MCF 10A (cell line): ENCODE measurements at regions of chr10 and their contacts with region 1.

Region 1: DNA sequence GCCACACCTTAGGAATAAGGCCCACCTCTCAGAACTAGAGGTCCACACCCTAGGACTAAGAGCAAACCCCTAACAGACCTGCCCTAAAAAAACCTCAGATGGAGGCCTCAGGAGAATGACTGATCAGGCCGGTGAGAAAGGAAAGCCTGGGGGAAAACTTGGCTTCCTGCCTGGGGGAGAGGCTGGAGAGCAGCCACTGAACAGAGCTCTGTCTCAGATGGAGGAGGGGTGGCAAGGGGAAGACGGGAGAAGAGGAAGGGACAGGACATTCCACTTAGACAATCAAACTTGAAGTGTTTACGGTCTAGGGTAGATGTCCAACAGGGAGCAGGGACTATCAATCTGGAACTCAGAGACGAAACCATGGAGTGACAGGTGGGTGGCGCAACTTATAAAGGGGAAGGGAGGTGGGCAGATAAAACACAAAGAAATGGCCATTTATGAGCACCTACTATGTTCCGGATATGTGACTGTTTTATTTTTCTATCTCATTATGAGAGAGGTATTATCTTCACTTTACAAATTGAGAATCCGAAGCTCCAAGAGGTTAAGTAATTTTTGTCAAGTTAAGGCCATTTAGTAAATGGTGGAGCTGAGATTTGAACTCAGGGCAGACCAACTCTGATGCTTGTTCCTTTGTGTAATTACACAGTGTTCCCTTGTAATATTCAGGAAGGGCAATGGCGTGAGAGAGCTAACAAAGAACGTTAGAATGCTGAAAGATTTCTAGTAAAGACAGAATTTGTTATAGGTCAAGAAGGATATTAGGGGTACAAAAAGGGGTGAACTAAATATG is 82.6 kb downstream of the DNMBP start:
- DNase-seq: peak; percentile 73
- H3K4me3 Mint-ChIP-seq: peak overlapping the region; percentile 42
- H3K27ac Mint-ChIP-seq: peak overlapping the region; percentile 44
- H3K4me1 Mint-ChIP-seq: peaks cover 50% of the 10 kb centered on the region
- H3K27me3 Mint-ChIP-seq: no peaks in the 10 kb centered on the region
- CTCF ChIP-seq: no peak

Region 2: DNA sequence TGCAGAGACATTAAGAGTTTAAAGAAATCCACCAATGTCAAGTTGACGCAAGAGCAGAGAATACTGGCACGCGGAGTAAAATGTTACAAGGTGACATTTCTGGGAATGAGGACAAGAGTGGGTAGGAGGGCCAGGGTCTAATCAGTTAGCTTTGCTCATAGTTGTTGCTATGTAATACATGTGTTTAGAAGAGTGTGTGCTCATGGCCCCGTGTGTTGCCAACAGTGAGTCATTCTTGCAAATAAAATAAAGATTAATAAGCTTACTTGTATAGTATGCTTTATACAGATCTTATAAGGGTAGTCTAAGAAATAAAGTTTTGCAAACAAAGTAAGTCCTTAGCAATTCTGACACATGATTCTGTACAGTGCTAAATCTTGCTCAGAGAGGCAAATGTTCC is 18.1 kb after region 1 on chr10:
- CTCF ChIA-PET with region 1: interaction called, 4 read pairs
- POLR2A ChIA-PET with region 1: interaction called, 11 read pairs
- intact Hi-C with region 1: no loop called
- DNase-seq: peak; percentile 58
- H3K4me3 Mint-ChIP-seq: no peak overlapping the region
- H3K27ac Mint-ChIP-seq: peak overlapping the region; percentile 52
- H3K4me1 Mint-ChIP-seq: peaks cover 16% of the 10 kb centered on the region
- H3K27me3 Mint-ChIP-seq: no peaks in the 10 kb centered on the region
- CTCF ChIP-seq: no peak

Region 3: GRCh38 chr10:99976886-99977665 is 50.0 kb after region 1 on chr10:
- CTCF ChIA-PET with region 1: no interaction called
- POLR2A ChIA-PET with region 1: interaction called, 3 read pairs
- intact Hi-C with region 1: loop called (anchors 5 kb)
- DNase-seq: peak; percentile 88
- H3K4me3 Mint-ChIP-seq: peak overlapping the region; percentile 67
- H3K27ac Mint-ChIP-seq: peak overlapping the region; percentile 100
- H3K4me1 Mint-ChIP-seq: peaks cover 24% of the 10 kb centered on the region
- H3K27me3 Mint-ChIP-seq: no peaks in the 10 kb centered on the region
- CTCF ChIP-seq: no peak